ENCODE measurements at regions of chr4 and their contacts with region 1.

Region 1: GRCh38 chr4:47686294-47686872 is 151.5 kb downstream of the CORIN start:
- DNase-seq: peak; percentile 43 to 78
- ATAC-seq: peak; percentile 80 to 87 (median 82)
- H3K4me3 ChIP-seq: no peak overlapping the region
- H3K4me3 Mint-ChIP-seq: no peak overlapping the region
- H3K27ac ChIP-seq: no peak overlapping the region
- H3K27ac Mint-ChIP-seq: no peak overlapping the region
- H3K4me1 ChIP-seq: no peaks in the 10 kb centered on the region
- H3K4me1 Mint-ChIP-seq: peaks cover 0 to 5% of the 10 kb centered on the region in 2 donors
- H3K27me3 ChIP-seq: peaks cover 2% of the 10 kb centered on the region
- H3K27me3 Mint-ChIP-seq: peaks cover 8 to 30% of the 10 kb centered on the region in 2 donors
- CTCF ChIP-seq: peak; percentile 71

Region 2: DNA sequence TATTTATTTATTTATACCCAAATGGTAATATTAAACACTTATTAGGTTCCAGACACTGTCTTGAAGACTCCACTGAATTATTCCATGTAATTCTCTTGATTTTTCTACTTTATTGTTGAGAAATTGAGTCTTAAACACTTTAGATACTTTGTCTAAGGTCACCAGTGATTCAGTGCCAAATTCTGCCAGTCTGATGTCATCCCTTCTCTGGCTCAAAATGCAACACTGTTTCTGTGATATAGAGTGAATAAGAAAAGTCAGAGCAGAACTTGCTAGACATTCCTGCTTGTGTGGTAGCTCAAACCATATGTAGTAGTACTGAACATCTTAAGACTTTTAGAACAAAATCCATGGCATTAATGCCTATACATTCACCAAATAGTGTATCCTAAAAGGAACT is 490.7 kb before region 1 on chr4:
- intact Hi-C with region 1: no loop called
- DNase-seq: no peak
- ATAC-seq: no peak
- H3K4me3 ChIP-seq: no peak overlapping the region
- H3K4me3 Mint-ChIP-seq: no peak overlapping the region
- H3K27ac ChIP-seq: no peak overlapping the region
- H3K27ac Mint-ChIP-seq: no peak overlapping the region
- H3K4me1 ChIP-seq: no peaks in the 10 kb centered on the region
- H3K4me1 Mint-ChIP-seq: no peaks in the 10 kb centered on the region
- H3K27me3 ChIP-seq: no peaks in the 10 kb centered on the region
- H3K27me3 Mint-ChIP-seq: no peaks in the 10 kb centered on the region
- CTCF ChIP-seq: no peak

Region 3: GRCh38 chr4:47510506-47511143 is 175.8 kb before region 1 on chr4:
- intact Hi-C with region 1: no loop called
- DNase-seq: peak in 1 of 2 donors; percentile 8
- ATAC-seq: peak; percentile 49 to 65 (median 63)
- H3K4me3 ChIP-seq: no peak overlapping the region
- H3K4me3 Mint-ChIP-seq: peak overlapping the region; percentile 35
- H3K27ac ChIP-seq: peak overlapping the region; percentile 29
- H3K27ac Mint-ChIP-seq: peak overlapping the region; percentile 53 to 80
- H3K4me1 ChIP-seq: peaks cover 3% of the 10 kb centered on the region
- H3K4me1 Mint-ChIP-seq: peaks cover 39 to 53% of the 10 kb centered on the region in 2 donors
- H3K27me3 ChIP-seq: no peaks in the 10 kb centered on the region
- H3K27me3 Mint-ChIP-seq: no peaks in the 10 kb centered on the region
- CTCF ChIP-seq: peak; percentile 26

Region 4: GRCh38 chr4:47715716-47716416 is 29.5 kb after region 1 on chr4:
- intact Hi-C with region 1: no loop called
- DNase-seq: no peak
- ATAC-seq: no peak
- H3K4me3 ChIP-seq: no peak overlapping the region
- H3K4me3 Mint-ChIP-seq: no peak overlapping the region
- H3K27ac ChIP-seq: no peak overlapping the region
- H3K27ac Mint-ChIP-seq: no peak overlapping the region
- H3K4me1 ChIP-seq: no peaks in the 10 kb centered on the region
- H3K4me1 Mint-ChIP-seq: no peaks in the 10 kb centered on the region
- H3K27me3 ChIP-seq: no peaks in the 10 kb centered on the region
- H3K27me3 Mint-ChIP-seq: peaks cover 9 to 28% of the 10 kb centered on the region in 2 donors
- CTCF ChIP-seq: no peak

Region 5: GRCh38 chr4:47733302-47734175 is 47.2 kb after region 1 on chr4:
- intact Hi-C with region 1: no loop called
- DNase-seq: no peak
- ATAC-seq: no peak
- H3K4me3 ChIP-seq: no peak overlapping the region
- H3K4me3 Mint-ChIP-seq: no peak overlapping the region
- H3K27ac ChIP-seq: no peak overlapping the region
- H3K27ac Mint-ChIP-seq: no peak overlapping the region
- H3K4me1 ChIP-seq: no peaks in the 10 kb centered on the region
- H3K4me1 Mint-ChIP-seq: no peaks in the 10 kb centered on the region
- H3K27me3 ChIP-seq: no peaks in the 10 kb centered on the region
- H3K27me3 Mint-ChIP-seq: peaks cover 26 to 31% of the 10 kb centered on the region in 2 donors
- CTCF ChIP-seq: no peak

Region 6: GRCh38 chr4:47836641-47837093 is 150.3 kb after region 1 on chr4:
- intact Hi-C with region 1: loop called (anchors 1 kb)
- DNase-seq: peak; percentile 23 to 68
- ATAC-seq: peak; percentile 61 to 66 (median 65)
- H3K4me3 ChIP-seq: peak overlapping the region; percentile 50
- H3K4me3 Mint-ChIP-seq: peak overlapping the region; percentile 92
- H3K27ac ChIP-seq: no peak overlapping the region
- H3K27ac Mint-ChIP-seq: peak overlapping the region in 1 of 2 donors; percentile 71
- H3K4me1 ChIP-seq: peaks cover 28% of the 10 kb centered on the region
- H3K4me1 Mint-ChIP-seq: peaks cover 27 to 33% of the 10 kb centered on the region in 2 donors
- H3K27me3 ChIP-seq: peaks cover 7% of the 10 kb centered on the region
- H3K27me3 Mint-ChIP-seq: peaks cover 14 to 27% of the 10 kb centered on the region in 2 donors
- CTCF ChIP-seq: peak; percentile 5

Region 7: DNA sequence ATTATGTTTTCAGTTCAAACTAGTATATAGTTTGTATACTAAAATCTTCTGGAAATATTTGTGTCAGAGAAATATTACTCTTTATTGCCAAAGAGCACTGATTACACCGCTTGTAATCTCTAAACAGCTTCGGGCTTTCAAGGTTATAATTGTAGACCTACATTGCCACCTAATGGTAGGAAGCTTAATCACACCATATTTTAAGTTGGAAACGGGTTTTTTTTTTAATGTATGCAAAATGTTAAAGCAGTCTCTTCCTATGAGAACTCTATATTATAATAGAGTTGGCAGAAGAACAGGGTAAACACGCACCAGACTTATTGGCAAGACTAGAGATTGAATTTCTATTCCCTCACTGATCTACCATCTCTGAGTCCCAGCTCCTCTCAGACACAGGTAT is 247.5 kb after region 1 on chr4:
- intact Hi-C with region 1: loop called (anchors 1 kb)
- DNase-seq: peak in 1 of 2 donors; percentile 74
- ATAC-seq: peak; percentile 72 to 84 (median 75)
- H3K4me3 ChIP-seq: no peak overlapping the region
- H3K4me3 Mint-ChIP-seq: no peak overlapping the region
- H3K27ac ChIP-seq: no peak overlapping the region
- H3K27ac Mint-ChIP-seq: no peak overlapping the region
- H3K4me1 ChIP-seq: no peaks in the 10 kb centered on the region
- H3K4me1 Mint-ChIP-seq: no peaks in the 10 kb centered on the region
- H3K27me3 ChIP-seq: peaks cover 2% of the 10 kb centered on the region
- H3K27me3 Mint-ChIP-seq: peaks cover 15 to 29% of the 10 kb centered on the region in 2 donors
- CTCF ChIP-seq: peak; percentile 87